ENCODE measurements at regions of chr6 and their contacts with region 1.

Region 1: DNA sequence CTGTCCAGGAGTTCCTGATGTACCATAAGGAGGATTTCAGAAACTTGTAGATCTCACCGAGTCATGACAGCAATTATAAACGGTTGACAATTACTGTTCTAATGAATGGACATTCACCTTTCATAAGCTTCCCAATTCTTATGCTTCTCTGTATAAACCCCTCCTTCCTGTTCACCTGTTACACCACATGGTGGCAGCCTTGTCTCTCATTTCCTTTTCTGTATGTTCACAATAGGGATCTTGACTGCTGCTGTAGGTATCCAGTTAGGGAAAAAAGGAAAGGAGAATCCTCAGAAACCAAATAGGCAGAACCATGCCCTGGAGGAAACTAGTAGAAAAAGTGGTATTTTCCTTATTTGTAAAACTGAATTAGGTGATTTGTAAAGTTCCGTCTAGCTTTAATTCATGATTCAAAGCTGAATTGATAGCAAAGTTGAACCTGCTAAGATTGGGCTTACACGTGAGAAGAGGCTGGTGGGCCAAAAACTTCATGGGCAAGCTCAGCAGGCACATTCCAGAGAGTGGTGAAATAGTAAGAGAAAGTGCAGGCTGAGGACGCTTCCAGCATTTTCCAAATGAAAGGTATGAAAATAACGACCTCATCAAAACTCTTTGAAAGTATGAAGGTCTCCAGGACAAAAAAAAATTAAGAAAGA is 29.0 kb upstream of the TBPL1 start:
- DNase-seq: peak; percentile 66
- ATAC-seq: peak; percentile 85
- H3K4me3 Mint-ChIP-seq: no peak overlapping the region
- H3K27ac Mint-ChIP-seq: no peak overlapping the region
- H3K4me1 Mint-ChIP-seq: peaks cover 2% of the 10 kb centered on the region
- H3K27me3 Mint-ChIP-seq: peaks cover 45% of the 10 kb centered on the region

Region 2: GRCh38 chr6:133447924-133448323 is 476.1 kb before region 1 on chr6:
- CTCF ChIA-PET with region 1: no interaction called
- DNase-seq: no peak
- ATAC-seq: no peak
- H3K4me3 Mint-ChIP-seq: no peak overlapping the region
- H3K27ac Mint-ChIP-seq: no peak overlapping the region
- H3K4me1 Mint-ChIP-seq: no peaks in the 10 kb centered on the region
- H3K27me3 Mint-ChIP-seq: no peaks in the 10 kb centered on the region

Region 3: GRCh38 chr6:133945158-133945557 is 21.1 kb after region 1 on chr6:
- CTCF ChIA-PET with region 1: interaction called, 13 read pairs
- DNase-seq: no peak
- ATAC-seq: no peak
- H3K4me3 Mint-ChIP-seq: no peak overlapping the region
- H3K27ac Mint-ChIP-seq: no peak overlapping the region
- H3K4me1 Mint-ChIP-seq: peaks cover 2% of the 10 kb centered on the region
- H3K27me3 Mint-ChIP-seq: peaks cover 18% of the 10 kb centered on the region

Region 4: GRCh38 chr6:133966654-133967329 is 42.7 kb after region 1 on chr6:
- CTCF ChIA-PET with region 1: interaction called, 11 read pairs
- DNase-seq: no peak
- ATAC-seq: no peak
- H3K4me3 Mint-ChIP-seq: no peak overlapping the region
- H3K27ac Mint-ChIP-seq: peak overlapping the region; percentile 10
- H3K4me1 Mint-ChIP-seq: peaks cover 34% of the 10 kb centered on the region
- H3K27me3 Mint-ChIP-seq: no peaks in the 10 kb centered on the region

Region 5: DNA sequence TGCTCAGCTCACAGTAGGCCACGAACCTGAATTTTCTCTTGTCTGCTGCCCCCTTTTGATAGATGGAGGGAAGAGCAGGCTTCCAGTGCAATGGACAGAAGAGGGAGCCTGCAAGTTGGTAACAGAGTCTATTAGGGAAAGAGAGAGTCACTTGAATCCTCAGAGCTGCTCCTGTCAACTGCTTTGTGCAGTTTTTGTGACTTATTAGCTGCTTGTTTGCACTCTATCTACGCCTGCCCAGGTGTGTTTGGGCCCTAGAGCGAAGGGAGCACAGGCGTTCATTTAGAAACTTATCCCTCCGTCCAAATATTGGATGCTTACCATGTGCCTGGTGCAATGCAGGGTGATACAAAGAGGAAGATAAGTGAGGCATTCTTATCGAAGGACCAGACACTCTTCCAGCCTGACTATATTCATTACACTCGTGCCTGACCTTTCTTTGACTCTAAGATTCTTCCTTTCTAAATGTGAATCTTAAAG is 139.9 kb after region 1 on chr6:
- CTCF ChIA-PET with region 1: interaction called, 85 read pairs
- DNase-seq: peak; percentile 66
- ATAC-seq: peak; percentile 91
- H3K4me3 Mint-ChIP-seq: no peak overlapping the region
- H3K27ac Mint-ChIP-seq: no peak overlapping the region
- H3K4me1 Mint-ChIP-seq: no peaks in the 10 kb centered on the region
- H3K27me3 Mint-ChIP-seq: peaks cover 2% of the 10 kb centered on the region

Region 6: DNA sequence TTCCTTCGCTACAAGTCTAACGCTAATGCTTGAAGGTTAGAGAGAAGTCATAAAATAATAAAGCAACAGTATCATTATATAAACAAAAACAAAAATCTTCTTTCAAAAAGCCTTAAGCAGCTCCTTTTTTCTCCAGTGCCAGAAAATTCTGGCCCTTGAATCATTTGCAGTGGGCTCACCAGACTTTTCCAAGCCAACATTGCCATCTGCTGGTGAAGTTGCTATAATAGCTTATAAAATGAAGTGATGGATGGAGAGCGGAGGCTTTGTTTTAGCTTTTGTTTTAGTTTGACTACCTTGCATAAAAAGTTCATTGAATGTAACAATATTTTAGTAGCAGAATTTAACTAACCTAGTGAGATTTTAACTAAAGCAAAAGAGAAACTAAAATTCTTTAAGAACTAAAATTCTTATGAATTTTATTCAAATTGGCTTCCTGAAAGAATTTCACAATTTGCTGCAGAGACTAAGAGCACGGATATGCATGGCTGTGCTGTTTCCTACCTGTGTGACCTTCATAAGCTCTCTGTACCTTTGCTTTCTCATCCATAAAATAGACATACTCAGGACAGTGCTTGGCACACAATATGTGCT is 173.1 kb after region 1 on chr6:
- CTCF ChIA-PET with region 1: interaction called, 205 read pairs
- DNase-seq: peak; percentile 74
- ATAC-seq: no peak
- H3K4me3 Mint-ChIP-seq: no peak overlapping the region
- H3K27ac Mint-ChIP-seq: no peak overlapping the region
- H3K4me1 Mint-ChIP-seq: peaks cover 7% of the 10 kb centered on the region
- H3K27me3 Mint-ChIP-seq: peaks cover 27% of the 10 kb centered on the region

Region 7: GRCh38 chr6:134111062-134111677 is 187.1 kb after region 1 on chr6:
- CTCF ChIA-PET with region 1: interaction called, 15 read pairs
- DNase-seq: peak; percentile 60
- ATAC-seq: peak; percentile 69
- H3K4me3 Mint-ChIP-seq: no peak overlapping the region
- H3K27ac Mint-ChIP-seq: no peak overlapping the region
- H3K4me1 Mint-ChIP-seq: peaks cover 4% of the 10 kb centered on the region
- H3K27me3 Mint-ChIP-seq: peaks cover 39% of the 10 kb centered on the region

Measured in activated CD8-positive, alpha-beta memory T cell treated with anti-CD3 and anti-CD28 coated beads, Interleukin-2, amount 10 ng/mL, durations not matched to agents 7 days and 5 days (primary cell).